Right cardiac atrium (tissue), 5 donors: ENCODE measurements at regions of chr17 and their contacts with region 1.

Region 1: GRCh38 chr17:41665566-41666236 is 23.0 kb upstream of the EIF1 start:
- DNase-seq: peak; percentile 88 to 96 (median 96)
- ATAC-seq: peak; percentile 95 to 96
- H3K4me3 ChIP-seq: peak overlapping the region; percentile 49
- H3K27ac ChIP-seq: peak overlapping the region; percentile 59
- H3K4me1 ChIP-seq: no peaks in the 10 kb centered on the region
- H3K27me3 ChIP-seq: no peaks in the 10 kb centered on the region

Region 2: GRCh38 chr17:40803617-40804082 is 862.1 kb before region 1 on chr17:
- intact Hi-C with region 1: loop called in 3 of 4 experiments (anchors 5 to 10 kb)
- DNase-seq: peak; percentile 73 to 91 (median 87)
- ATAC-seq: peak; percentile 88
- H3K4me3 ChIP-seq: no peak overlapping the region
- H3K27ac ChIP-seq: no peak overlapping the region
- H3K4me1 ChIP-seq: no peaks in the 10 kb centered on the region
- H3K27me3 ChIP-seq: peaks cover 2% of the 10 kb centered on the region

Region 3: DNA sequence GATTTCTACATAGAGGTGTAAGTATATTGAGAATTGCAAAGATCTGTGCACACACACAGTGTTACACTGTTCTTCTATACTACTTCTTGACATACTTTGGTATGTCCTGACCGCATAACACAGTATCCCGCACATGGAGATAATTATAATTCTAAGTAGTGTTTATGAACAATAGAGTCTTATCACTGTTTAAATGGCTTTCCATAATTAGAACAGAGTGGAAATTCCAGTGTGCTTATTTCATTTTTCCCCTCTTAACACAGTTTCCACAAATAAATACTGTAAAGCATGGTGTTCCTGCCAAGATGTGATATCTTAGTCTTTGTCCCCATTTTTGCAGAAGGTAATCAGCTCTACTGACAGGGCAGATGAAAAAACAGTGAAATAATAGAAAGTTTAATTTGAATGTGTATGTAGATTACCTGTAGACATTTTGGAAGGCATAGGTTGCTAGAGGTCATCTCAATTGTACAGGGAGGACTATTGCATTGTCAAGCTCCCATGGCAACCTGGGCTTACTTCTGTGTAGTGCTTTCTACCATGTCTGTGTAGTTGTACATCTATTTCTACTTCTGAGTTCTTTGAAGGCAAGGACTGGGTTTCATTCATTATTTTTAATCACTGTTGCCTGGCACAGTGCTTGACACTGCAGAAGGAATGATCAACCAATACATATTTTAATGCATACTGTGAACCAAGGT is 855.8 kb before region 1 on chr17:
- intact Hi-C with region 1: loop called in 3 of 4 experiments (anchors 5 to 10 kb)
- DNase-seq: no peak
- ATAC-seq: peak; percentile 28 to 33
- H3K4me3 ChIP-seq: no peak overlapping the region
- H3K27ac ChIP-seq: no peak overlapping the region
- H3K4me1 ChIP-seq: peaks cover 1% of the 10 kb centered on the region
- H3K27me3 ChIP-seq: no peaks in the 10 kb centered on the region

Region 4: DNA sequence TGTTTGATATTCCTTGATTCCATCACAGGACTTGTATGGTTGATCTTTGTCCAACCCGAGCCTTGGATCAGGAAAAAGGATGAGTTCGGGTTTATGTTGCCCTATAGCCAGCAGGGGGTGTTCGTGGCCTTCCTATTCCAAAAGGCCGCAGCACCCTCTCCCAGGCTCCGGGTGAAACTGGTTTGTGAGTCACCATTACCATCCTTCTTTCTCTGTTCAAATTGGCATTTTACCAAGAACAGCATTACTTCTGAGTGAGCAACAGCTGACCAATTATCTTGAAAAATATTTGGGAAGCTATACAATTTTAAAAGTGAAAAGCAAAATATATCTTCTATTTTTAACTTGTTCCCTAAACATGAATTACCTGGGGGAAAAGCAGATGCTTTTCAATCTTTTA is 756.4 kb before region 1 on chr17:
- intact Hi-C with region 1: loop called in 2 of 4 experiments (anchors 5 to 10 kb)
- DNase-seq: peak; percentile 70 to 84 (median 78)
- ATAC-seq: peak; percentile 94 to 96
- H3K4me3 ChIP-seq: no peak overlapping the region
- H3K27ac ChIP-seq: no peak overlapping the region
- H3K4me1 ChIP-seq: no peaks in the 10 kb centered on the region
- H3K27me3 ChIP-seq: no peaks in the 10 kb centered on the region

Region 5: GRCh38 chr17:41199421-41200078 is 466.2 kb before region 1 on chr17:
- intact Hi-C with region 1: no loop called
- DNase-seq: no peak
- ATAC-seq: no peak
- H3K4me3 ChIP-seq: no peak overlapping the region
- H3K27ac ChIP-seq: no peak overlapping the region
- H3K4me1 ChIP-seq: no peaks in the 10 kb centered on the region
- H3K27me3 ChIP-seq: no peaks in the 10 kb centered on the region

Region 6: DNA sequence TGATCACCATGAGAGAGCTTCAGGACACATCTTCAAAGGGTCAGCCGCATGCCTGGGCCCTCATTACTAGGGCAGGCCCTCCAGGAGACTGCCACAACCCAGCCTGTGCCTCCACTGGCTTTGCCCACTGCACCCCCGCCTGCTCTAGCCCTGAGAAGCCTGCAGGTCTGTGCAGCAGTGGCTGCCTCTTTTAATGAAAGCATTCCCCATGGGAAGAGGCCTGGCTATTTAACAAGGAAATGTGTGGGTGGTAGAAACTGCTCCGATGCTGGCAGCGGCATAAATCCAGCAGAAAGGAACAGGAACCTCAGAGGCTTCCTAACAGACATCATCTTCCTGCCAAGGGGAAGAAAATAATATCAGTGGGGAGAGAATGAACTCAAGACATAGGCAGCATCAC is 198.1 kb before region 1 on chr17:
- intact Hi-C with region 1: no loop called
- DNase-seq: no peak
- ATAC-seq: no peak
- H3K4me3 ChIP-seq: no peak overlapping the region
- H3K27ac ChIP-seq: no peak overlapping the region
- H3K4me1 ChIP-seq: no peaks in the 10 kb centered on the region
- H3K27me3 ChIP-seq: no peaks in the 10 kb centered on the region